ENCODE measurements at regions of chr1 and their contacts with region 1.

Region 1: DNA sequence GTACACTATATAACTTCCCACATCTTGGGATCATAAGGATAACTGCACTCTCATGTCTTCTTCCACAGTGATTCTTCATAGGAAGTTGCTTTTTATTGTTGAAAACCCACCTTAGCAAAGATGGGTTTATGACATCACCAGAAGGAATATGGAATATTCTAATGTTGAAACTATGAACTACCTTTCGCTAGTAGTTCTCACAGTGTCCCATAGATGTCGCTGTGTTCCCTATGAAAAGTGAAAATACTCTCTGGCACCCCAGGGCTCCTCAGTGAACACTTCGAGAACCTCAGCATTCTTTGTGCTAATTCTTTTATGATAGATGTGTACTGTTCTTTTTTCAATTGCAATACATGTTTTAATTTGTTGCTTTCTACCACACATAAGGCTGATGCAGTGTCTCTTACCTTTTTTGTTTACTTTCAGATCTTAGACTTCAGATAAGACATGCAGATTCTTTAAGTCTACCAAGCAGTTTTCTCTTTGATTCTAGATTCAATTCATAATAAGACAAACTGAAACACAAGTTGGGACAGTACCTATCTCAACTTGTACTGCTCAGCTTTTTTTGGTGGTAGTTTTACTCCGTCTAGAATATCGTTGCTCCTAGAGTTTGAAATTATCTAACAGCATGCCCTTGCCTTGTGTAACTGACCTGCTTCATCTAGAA is 90.8 kb downstream of the GTF2B start:
- DNase-seq: peak in 4 of 5 donors; percentile 18 to 45 (median 36)
- H3K4me3 ChIP-seq: no peak overlapping the region
- H3K4me3 Mint-ChIP-seq: peak overlapping the region in 4 of 8 donors; percentile 13 to 53 (median 39)
- H3K27ac ChIP-seq: no peak overlapping the region
- H3K27ac Mint-ChIP-seq: peak overlapping the region in 4 of 7 donors; percentile 20 to 80 (median 64)
- H3K4me1 ChIP-seq: no peaks in the 10 kb centered on the region
- H3K4me1 Mint-ChIP-seq: peaks cover 7 to 15% (median 12%) of the 10 kb centered on the region in 4 donors
- H3K27me3 ChIP-seq: no peaks in the 10 kb centered on the region
- H3K27me3 Mint-ChIP-seq: no peaks in the 10 kb centered on the region

Region 2: DNA sequence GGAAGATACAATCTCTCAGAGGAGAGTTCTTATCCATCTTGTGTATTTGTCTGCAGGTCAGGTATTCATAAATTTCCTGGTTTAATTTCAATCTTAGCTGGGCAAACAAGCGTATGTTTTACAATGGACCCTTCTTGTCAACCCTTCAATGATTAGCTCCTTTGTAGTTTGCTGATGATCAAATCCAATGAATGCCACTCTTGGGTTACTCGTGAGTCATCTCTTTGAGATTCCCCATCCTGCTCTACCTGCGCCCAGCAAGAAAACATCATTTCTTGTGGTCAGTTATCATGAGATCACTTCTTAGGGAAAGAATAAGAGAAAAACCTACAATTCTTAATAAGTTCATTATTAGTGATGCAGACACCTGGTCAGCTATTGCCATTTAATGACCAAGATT is 688.7 kb before region 1 on chr1:
- CTCF ChIA-PET with region 1: no interaction called
- POLR2A ChIA-PET with region 1: no interaction called
- intact Hi-C with region 1: no loop called
- DNase-seq: no peak
- H3K4me3 ChIP-seq: no peak overlapping the region
- H3K4me3 Mint-ChIP-seq: no peak overlapping the region
- H3K27ac ChIP-seq: no peak overlapping the region
- H3K27ac Mint-ChIP-seq: no peak overlapping the region
- H3K4me1 ChIP-seq: no peaks in the 10 kb centered on the region
- H3K4me1 Mint-ChIP-seq: no peaks in the 10 kb centered on the region
- H3K27me3 ChIP-seq: no peaks in the 10 kb centered on the region
- H3K27me3 Mint-ChIP-seq: no peaks in the 10 kb centered on the region

Region 3: DNA sequence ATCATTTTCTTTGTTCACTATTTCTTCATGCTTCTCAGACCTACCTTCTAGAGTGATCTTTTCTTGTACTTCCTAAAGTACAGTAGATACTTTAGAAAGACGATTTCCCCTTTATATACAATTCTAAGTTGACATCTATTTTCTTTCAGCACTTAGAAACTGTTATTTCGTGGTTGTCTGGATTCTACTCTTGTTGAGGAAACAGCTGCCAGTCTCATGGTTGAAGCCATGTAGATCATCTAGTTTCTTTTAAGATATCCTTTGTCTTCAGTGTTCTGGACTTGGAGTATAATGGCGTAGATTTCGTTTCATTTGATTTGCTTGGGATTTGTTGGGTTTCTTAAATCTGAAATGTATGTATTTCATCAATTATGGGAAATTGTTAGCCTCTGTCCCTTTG is 48.8 kb before region 1 on chr1:
- CTCF ChIA-PET with region 1: no interaction called
- POLR2A ChIA-PET with region 1: no interaction called
- intact Hi-C with region 1: no loop called
- DNase-seq: no peak
- H3K4me3 ChIP-seq: no peak overlapping the region
- H3K4me3 Mint-ChIP-seq: no peak overlapping the region
- H3K27ac ChIP-seq: no peak overlapping the region
- H3K27ac Mint-ChIP-seq: no peak overlapping the region
- H3K4me1 ChIP-seq: no peaks in the 10 kb centered on the region
- H3K4me1 Mint-ChIP-seq: peaks cover 0 to 8% (median 4%) of the 10 kb centered on the region in 4 donors
- H3K27me3 ChIP-seq: no peaks in the 10 kb centered on the region
- H3K27me3 Mint-ChIP-seq: no peaks in the 10 kb centered on the region

Region 4: DNA sequence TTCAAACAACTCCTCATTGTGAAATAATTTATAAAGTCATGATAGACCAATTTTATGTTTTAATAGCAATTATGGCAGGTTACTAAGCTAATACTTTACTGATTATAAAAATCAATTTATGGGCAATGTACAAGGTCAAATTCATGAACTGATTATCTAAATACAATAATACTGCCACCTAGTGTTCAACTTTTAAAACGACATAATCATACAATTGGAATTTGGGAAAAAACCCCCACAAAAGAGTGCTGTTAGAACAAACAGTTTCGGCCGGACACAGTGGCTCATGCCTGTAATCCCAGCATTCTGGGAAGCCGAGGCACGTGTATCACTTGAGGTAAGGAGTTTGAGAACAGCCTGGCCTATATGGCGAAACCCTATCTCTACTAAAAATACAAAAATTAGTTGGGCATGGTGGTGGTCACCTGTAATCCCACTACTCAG is 76.9 kb after region 1 on chr1:
- CTCF ChIA-PET with region 1: interaction called, 20 read pairs
- POLR2A ChIA-PET with region 1: no interaction called
- intact Hi-C with region 1: loop called (anchors 1 kb)
- DNase-seq: peak; percentile 19 to 41 (median 30)
- H3K4me3 ChIP-seq: no peak overlapping the region
- H3K4me3 Mint-ChIP-seq: peak overlapping the region in 3 of 8 donors; percentile 8 to 59 (median 39)
- H3K27ac ChIP-seq: no peak overlapping the region
- H3K27ac Mint-ChIP-seq: peak overlapping the region in 3 of 7 donors; percentile 33 to 70 (median 35)
- H3K4me1 ChIP-seq: peaks cover 36% of the 10 kb centered on the region
- H3K4me1 Mint-ChIP-seq: peaks cover 32 to 67% (median 46%) of the 10 kb centered on the region in 4 donors
- H3K27me3 ChIP-seq: no peaks in the 10 kb centered on the region
- H3K27me3 Mint-ChIP-seq: no peaks in the 10 kb centered on the region

Region 5: GRCh38 chr1:88935522-88936222 is 135.2 kb after region 1 on chr1:
- CTCF ChIA-PET with region 1: no interaction called
- POLR2A ChIA-PET with region 1: no interaction called
- intact Hi-C with region 1: loop called (anchors 1 kb)
- DNase-seq: peak in 4 of 5 donors; percentile 24 to 39 (median 34)
- H3K4me3 ChIP-seq: no peak overlapping the region
- H3K4me3 Mint-ChIP-seq: no peak overlapping the region
- H3K27ac ChIP-seq: no peak overlapping the region
- H3K27ac Mint-ChIP-seq: peak overlapping the region in 2 of 7 donors; percentile 2 to 27
- H3K4me1 ChIP-seq: no peaks in the 10 kb centered on the region
- H3K4me1 Mint-ChIP-seq: peaks cover 1 to 13% (median 5%) of the 10 kb centered on the region in 4 donors
- H3K27me3 ChIP-seq: no peaks in the 10 kb centered on the region
- H3K27me3 Mint-ChIP-seq: no peaks in the 10 kb centered on the region